ENCODE measurements at regions of chr6 and their contacts with region 1.

Region 1: GRCh38 chr6:96391776-96392360 is 129.7 kb upstream of the UFL1 start:
- DNase-seq: no peak
- H3K4me3 ChIP-seq: no peak overlapping the region
- H3K4me3 Mint-ChIP-seq: no peak overlapping the region
- H3K27ac Mint-ChIP-seq: no peak overlapping the region
- H3K4me1 ChIP-seq: no peaks in the 10 kb centered on the region
- H3K4me1 Mint-ChIP-seq: peaks cover 10% of the 10 kb centered on the region
- H3K27me3 ChIP-seq: no peaks in the 10 kb centered on the region
- H3K27me3 Mint-ChIP-seq: no peaks in the 10 kb centered on the region
- CTCF ChIP-seq: no peak

Region 2: GRCh38 chr6:96420294-96420693 is 28.4 kb after region 1 on chr6:
- CTCF ChIA-PET with region 1: no interaction called
- POLR2A ChIA-PET with region 1: no interaction called
- intact Hi-C with region 1: no loop called
- DNase-seq: no peak
- H3K4me3 ChIP-seq: no peak overlapping the region
- H3K4me3 Mint-ChIP-seq: no peak overlapping the region
- H3K27ac Mint-ChIP-seq: no peak overlapping the region
- H3K4me1 ChIP-seq: no peaks in the 10 kb centered on the region
- H3K4me1 Mint-ChIP-seq: no peaks in the 10 kb centered on the region
- H3K27me3 ChIP-seq: no peaks in the 10 kb centered on the region
- H3K27me3 Mint-ChIP-seq: no peaks in the 10 kb centered on the region
- CTCF ChIP-seq: no peak

Region 3: GRCh38 chr6:96468681-96469224 is 76.9 kb after region 1 on chr6:
- CTCF ChIA-PET with region 1: interaction called, 3 read pairs
- POLR2A ChIA-PET with region 1: no interaction called
- intact Hi-C with region 1: loop called (anchors 1 kb)
- DNase-seq: no peak
- H3K4me3 ChIP-seq: no peak overlapping the region
- H3K4me3 Mint-ChIP-seq: no peak overlapping the region
- H3K27ac Mint-ChIP-seq: no peak overlapping the region
- H3K4me1 ChIP-seq: peaks cover 7% of the 10 kb centered on the region; the same call in 1 of the 2 replicates
- H3K4me1 Mint-ChIP-seq: no peaks in the 10 kb centered on the region
- H3K27me3 ChIP-seq: no peaks in the 10 kb centered on the region
- H3K27me3 Mint-ChIP-seq: no peaks in the 10 kb centered on the region
- CTCF ChIP-seq: peak; percentile 19 to 33

Region 4: GRCh38 chr6:96521644-96522464 is 130.0 kb after region 1 on chr6 and contains the start of gene UFL1:
- CTCF ChIA-PET with region 1: no interaction called
- POLR2A ChIA-PET with region 1: no interaction called
- intact Hi-C with region 1: loop called (anchors 2 kb)
- DNase-seq: peak; percentile 93 to 94
- H3K4me3 ChIP-seq: peak within 1 kb of the TSS; percentile 85
- H3K4me3 Mint-ChIP-seq: peak within 1 kb of the TSS; percentile 93
- H3K27ac Mint-ChIP-seq: peak within 1 kb of the TSS; percentile 99
- H3K4me1 ChIP-seq: peaks cover 18% of the 10 kb centered on the region
- H3K4me1 Mint-ChIP-seq: peaks cover 6% of the 10 kb centered on the region
- H3K27me3 ChIP-seq: no peaks in the 10 kb centered on the region
- H3K27me3 Mint-ChIP-seq: no peaks in the 10 kb centered on the region
- CTCF ChIP-seq: no peak
- total RNA-seq, gene UFL1: 19.4 and 21.9 TPM in 2 replicates

Region 5: GRCh38 chr6:96611342-96611991 is 219.6 kb after region 1 on chr6:
- CTCF ChIA-PET with region 1: no interaction called
- POLR2A ChIA-PET with region 1: no interaction called
- intact Hi-C with region 1: loop called (anchors 5 kb)
- DNase-seq: no peak
- H3K4me3 ChIP-seq: no peak overlapping the region
- H3K4me3 Mint-ChIP-seq: no peak overlapping the region
- H3K27ac Mint-ChIP-seq: no peak overlapping the region
- H3K4me1 ChIP-seq: no peaks in the 10 kb centered on the region
- H3K4me1 Mint-ChIP-seq: no peaks in the 10 kb centered on the region
- H3K27me3 ChIP-seq: no peaks in the 10 kb centered on the region
- H3K27me3 Mint-ChIP-seq: peaks cover 7% of the 10 kb centered on the region
- CTCF ChIP-seq: no peak

Region 6: DNA sequence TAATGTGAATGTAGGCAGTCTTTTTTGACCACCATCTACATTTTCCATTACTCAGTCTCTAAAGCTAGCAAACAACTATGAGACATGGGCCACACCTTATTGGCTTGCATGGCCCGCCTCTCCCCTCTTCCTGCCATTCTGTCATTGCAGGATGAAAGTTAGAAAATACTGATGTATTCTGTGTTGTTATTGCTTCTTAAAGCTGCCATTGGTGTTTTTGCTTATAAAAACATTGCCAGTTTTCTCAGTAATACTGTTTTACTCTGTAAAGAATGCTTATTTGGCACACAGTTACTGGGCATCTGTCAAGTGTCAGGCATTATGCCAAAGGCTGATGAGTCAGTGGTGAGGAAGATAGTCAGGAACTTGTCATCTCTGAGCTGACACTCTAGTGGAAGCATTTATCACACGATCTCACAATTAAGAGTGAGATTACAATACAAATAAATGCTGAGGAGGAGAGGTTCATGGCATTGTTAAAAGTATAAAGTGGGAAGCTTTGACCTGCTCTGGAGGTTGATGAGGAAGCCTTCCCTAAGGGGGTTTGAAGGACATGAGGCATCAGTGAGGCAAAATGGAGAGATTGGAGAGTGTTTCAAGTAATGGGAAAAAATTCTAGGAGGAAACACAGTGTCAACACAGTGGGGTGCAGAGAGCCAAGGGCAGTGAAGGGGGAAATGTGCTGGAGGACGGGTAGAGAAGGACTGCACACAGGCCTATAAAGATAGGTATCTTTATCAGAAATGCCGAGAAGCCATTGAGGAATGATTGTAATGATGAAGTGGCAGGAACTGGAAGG is 547.3 kb after region 1 on chr6:
- CTCF ChIA-PET with region 1: no interaction called
- POLR2A ChIA-PET with region 1: no interaction called
- intact Hi-C with region 1: no loop called
- DNase-seq: no peak
- H3K4me3 ChIP-seq: no peak overlapping the region
- H3K4me3 Mint-ChIP-seq: no peak overlapping the region
- H3K27ac Mint-ChIP-seq: no peak overlapping the region
- H3K4me1 ChIP-seq: no peaks in the 10 kb centered on the region
- H3K4me1 Mint-ChIP-seq: no peaks in the 10 kb centered on the region
- H3K27me3 ChIP-seq: no peaks in the 10 kb centered on the region
- H3K27me3 Mint-ChIP-seq: peaks cover 23% of the 10 kb centered on the region
- CTCF ChIP-seq: no peak

Measured in Caco-2 (cell line).